Caco-2 (cell line): ENCODE measurements at regions of chr5 and their contacts with region 1.

Region 1: DNA sequence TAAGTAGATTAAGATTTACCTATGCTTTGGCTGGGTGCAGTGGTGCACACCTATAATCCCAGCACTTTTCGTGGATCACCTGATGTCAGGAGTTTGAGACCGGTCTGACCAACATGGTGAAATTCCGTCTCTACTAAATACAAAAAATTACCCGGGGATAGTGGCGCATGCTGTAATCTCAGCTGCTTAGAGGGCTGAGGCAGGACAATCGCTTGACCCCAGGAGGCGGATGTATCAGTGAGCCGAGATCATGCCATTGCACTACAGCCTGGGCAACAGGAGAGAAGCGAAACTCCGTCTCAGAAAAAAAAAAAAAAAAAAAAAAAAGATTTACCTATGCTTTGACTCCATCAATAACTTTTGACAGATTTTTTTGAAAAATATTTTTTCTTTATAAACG is 267.1 kb upstream of the SEMA6A start:
- DNase-seq: no peak
- H3K4me3 ChIP-seq: no peak overlapping the region
- H3K4me3 Mint-ChIP-seq: no peak overlapping the region
- H3K27ac Mint-ChIP-seq: no peak overlapping the region
- H3K4me1 ChIP-seq: no peaks in the 10 kb centered on the region; the same call in 1 of the 2 replicates
- H3K4me1 Mint-ChIP-seq: peaks cover 13% of the 10 kb centered on the region
- H3K27me3 ChIP-seq: no peaks in the 10 kb centered on the region
- H3K27me3 Mint-ChIP-seq: no peaks in the 10 kb centered on the region
- CTCF ChIP-seq: no peak

Region 2: DNA sequence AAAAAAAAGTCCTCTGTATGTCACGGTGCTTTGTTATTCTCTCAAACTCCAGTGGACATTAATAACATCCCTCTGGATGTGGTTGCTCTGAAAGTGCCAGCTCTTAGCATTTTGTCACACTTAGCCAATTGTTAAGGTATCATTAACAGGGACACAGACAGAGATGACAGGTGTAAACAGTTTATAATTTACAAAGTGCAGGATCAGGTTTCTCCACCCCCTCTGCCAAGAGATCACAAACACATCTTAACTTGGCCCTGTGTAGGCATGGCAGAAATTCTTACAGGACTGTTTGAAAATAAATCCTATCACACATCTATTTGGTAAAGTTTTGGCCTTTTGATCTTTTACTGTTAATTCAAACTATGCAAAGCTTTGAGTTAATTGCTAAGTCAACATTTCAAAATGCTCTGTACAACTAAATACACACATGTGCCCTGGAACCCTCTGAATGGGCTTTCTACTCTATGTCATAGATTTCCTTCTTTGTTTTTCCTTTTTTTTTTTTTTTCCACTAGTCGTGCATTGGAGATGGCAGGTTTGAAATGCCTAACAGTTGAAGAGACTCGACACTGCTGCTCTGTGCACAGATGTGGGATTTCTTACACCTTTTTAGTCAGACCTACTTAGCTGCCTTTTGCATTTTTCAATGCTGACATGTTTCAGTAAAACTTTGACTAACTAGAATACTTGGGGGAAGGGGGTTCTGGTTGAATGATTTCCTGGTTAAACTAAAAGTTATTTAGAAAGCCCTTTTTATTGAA is 308.8 kb before region 1 on chr5:
- CTCF ChIA-PET with region 1: no interaction called
- POLR2A ChIA-PET with region 1: no interaction called
- intact Hi-C with region 1: loop called (anchors 2 kb)
- DNase-seq: peak; percentile 61
- H3K4me3 ChIP-seq: no peak overlapping the region
- H3K4me3 Mint-ChIP-seq: no peak overlapping the region
- H3K27ac Mint-ChIP-seq: no peak overlapping the region
- H3K4me1 ChIP-seq: peaks cover 70% of the 10 kb centered on the region
- H3K4me1 Mint-ChIP-seq: peaks cover 28% of the 10 kb centered on the region
- H3K27me3 ChIP-seq: no peaks in the 10 kb centered on the region
- H3K27me3 Mint-ChIP-seq: no peaks in the 10 kb centered on the region
- CTCF ChIP-seq: no peak

Region 3: GRCh38 chr5:116546033-116546728 is 295.6 kb before region 1 on chr5:
- CTCF ChIA-PET with region 1: no interaction called
- POLR2A ChIA-PET with region 1: no interaction called
- intact Hi-C with region 1: loop called (anchors 1 kb)
- DNase-seq: peak; percentile 82 to 91
- H3K4me3 ChIP-seq: no peak overlapping the region
- H3K4me3 Mint-ChIP-seq: peak overlapping the region; percentile 16
- H3K27ac Mint-ChIP-seq: peak overlapping the region; percentile 38
- H3K4me1 ChIP-seq: peaks cover 46% of the 10 kb centered on the region
- H3K4me1 Mint-ChIP-seq: peaks cover 33% of the 10 kb centered on the region
- H3K27me3 ChIP-seq: no peaks in the 10 kb centered on the region
- H3K27me3 Mint-ChIP-seq: no peaks in the 10 kb centered on the region
- CTCF ChIP-seq: no peak

Region 4: DNA sequence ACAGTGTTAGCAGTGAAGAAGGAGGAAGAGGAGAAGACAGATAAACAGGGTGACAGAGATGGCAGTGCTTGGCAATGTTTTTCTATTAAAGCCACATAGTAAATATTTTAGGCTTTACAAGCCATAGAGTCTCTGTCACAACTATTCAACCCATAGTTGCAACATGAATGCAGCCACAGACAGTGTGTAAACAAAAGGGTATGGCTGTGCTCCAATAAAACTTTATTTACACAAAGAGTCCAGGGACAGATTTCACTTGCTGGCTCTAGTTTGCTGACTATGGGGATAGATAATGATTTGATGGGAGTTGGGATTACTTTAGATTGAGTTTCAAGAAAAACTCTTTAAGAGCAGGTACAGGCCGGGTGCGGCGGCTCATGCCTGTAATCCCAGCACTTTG is 42.3 kb before region 1 on chr5:
- CTCF ChIA-PET with region 1: no interaction called
- POLR2A ChIA-PET with region 1: no interaction called
- intact Hi-C with region 1: loop called (anchors 2 kb)
- DNase-seq: peak in 1 of 2 experiments; percentile 15
- H3K4me3 ChIP-seq: no peak overlapping the region
- H3K4me3 Mint-ChIP-seq: no peak overlapping the region
- H3K27ac Mint-ChIP-seq: no peak overlapping the region
- H3K4me1 ChIP-seq: peaks cover 3% of the 10 kb centered on the region; the same call in 1 of the 2 replicates
- H3K4me1 Mint-ChIP-seq: peaks cover 7% of the 10 kb centered on the region
- H3K27me3 ChIP-seq: no peaks in the 10 kb centered on the region
- H3K27me3 Mint-ChIP-seq: no peaks in the 10 kb centered on the region
- CTCF ChIP-seq: no peak

Region 5: DNA sequence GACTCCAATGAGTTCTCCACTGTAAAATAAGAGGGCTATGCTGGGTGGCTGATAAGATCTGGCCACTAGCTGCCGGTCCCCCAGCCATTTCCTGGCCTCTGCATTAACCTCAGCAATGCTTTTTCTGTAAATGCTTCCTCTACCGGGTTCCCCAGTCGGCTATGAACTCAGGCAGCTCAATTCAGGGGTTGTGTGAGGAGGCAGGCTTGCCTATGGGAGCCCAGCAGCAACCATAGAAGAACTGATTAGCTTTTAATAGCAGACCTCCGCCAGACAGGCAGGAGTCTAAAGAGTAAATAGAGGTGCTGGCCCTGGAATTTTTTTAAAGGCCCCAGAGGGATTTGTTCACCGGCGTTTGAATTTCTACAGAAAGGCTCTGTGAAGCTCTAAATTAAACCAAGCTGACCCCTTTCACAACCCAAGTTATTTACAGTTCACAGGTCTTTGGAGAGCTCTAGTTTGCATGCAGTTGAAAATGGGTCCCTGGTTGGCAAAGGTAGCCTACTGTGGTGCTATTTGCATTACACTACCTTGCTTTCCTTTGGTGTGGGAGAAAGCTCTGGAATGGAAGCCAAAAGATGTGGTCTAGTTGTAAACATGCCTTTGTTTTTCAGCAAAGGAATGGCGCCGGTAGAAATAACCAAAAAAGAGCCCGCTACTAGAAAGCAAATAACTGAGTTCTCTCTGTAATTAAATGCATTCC is 22.6 kb after region 1 on chr5:
- CTCF ChIA-PET with region 1: interaction called, 3 read pairs
- POLR2A ChIA-PET with region 1: interaction called, 4 read pairs
- intact Hi-C with region 1: loop called (anchors 1 kb)
- DNase-seq: peak; percentile 49 to 51
- H3K4me3 ChIP-seq: no peak overlapping the region
- H3K4me3 Mint-ChIP-seq: no peak overlapping the region
- H3K27ac Mint-ChIP-seq: peak overlapping the region; percentile 43
- H3K4me1 ChIP-seq: peaks cover 34% of the 10 kb centered on the region
- H3K4me1 Mint-ChIP-seq: peaks cover 24% of the 10 kb centered on the region
- H3K27me3 ChIP-seq: no peaks in the 10 kb centered on the region
- H3K27me3 Mint-ChIP-seq: no peaks in the 10 kb centered on the region
- CTCF ChIP-seq: no peak

Region 6: DNA sequence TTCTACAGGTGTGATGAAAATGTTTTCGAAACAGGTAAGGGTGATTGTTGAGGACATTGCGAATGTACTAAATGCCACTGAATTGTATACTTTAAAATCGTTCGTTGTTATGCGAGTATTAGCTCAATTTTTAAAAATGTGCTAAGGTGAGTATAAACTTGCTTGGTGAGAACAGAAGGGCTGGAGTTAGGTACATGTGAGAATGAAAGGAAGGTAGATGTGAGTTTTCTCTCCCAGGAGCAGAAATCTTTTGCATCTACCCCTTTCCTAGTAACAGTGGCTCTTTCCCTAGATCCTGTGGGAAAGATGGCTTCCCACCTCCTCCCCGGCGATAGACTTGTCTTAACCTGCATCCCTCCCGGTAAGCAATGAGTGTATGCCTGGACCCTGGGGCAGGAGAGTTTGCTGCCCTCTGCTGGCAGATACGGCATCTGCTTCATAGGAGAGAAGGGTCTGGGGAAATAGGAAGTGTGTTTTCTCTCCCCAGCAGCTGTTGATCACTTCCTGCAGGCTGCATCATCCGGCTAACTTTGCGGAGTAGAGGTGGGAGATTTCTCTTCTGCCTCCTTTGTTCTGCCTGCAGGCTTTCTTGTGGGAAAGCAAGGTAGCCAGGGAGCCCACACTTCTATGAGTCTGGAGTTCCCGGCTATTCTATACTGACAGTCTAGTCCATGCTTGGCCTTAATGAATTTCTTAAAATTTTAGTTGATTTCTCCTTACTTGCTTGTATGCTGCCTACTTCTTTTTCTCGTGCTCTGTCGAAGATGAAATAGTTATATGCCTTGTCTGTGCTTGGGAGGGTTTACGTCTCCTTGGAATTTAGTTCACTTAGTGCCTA is 106.2 kb after region 1 on chr5:
- CTCF ChIA-PET with region 1: no interaction called
- POLR2A ChIA-PET with region 1: no interaction called
- intact Hi-C with region 1: loop called (anchors 2 kb)
- DNase-seq: peak; percentile 80 to 83
- H3K4me3 ChIP-seq: no peak overlapping the region
- H3K4me3 Mint-ChIP-seq: no peak overlapping the region
- H3K27ac Mint-ChIP-seq: no peak overlapping the region
- H3K4me1 ChIP-seq: no peaks in the 10 kb centered on the region
- H3K4me1 Mint-ChIP-seq: no peaks in the 10 kb centered on the region
- H3K27me3 ChIP-seq: no peaks in the 10 kb centered on the region
- H3K27me3 Mint-ChIP-seq: no peaks in the 10 kb centered on the region
- CTCF ChIP-seq: peak; percentile 79 to 86